HEK293 (cell line): ENCODE measurements at regions of chr5 and their contacts with region 1.

Region 1: GRCh38 chr5:160071516-160071915 is 47.7 kb downstream of the PWWP2A start:
- H3K4me3 ChIP-seq: no peak overlapping the region
- H3K27ac ChIP-seq: no peak overlapping the region
- H3K4me1 ChIP-seq: peaks cover 6% of the 10 kb centered on the region
- CTCF ChIP-seq: no peak

Region 2: DNA sequence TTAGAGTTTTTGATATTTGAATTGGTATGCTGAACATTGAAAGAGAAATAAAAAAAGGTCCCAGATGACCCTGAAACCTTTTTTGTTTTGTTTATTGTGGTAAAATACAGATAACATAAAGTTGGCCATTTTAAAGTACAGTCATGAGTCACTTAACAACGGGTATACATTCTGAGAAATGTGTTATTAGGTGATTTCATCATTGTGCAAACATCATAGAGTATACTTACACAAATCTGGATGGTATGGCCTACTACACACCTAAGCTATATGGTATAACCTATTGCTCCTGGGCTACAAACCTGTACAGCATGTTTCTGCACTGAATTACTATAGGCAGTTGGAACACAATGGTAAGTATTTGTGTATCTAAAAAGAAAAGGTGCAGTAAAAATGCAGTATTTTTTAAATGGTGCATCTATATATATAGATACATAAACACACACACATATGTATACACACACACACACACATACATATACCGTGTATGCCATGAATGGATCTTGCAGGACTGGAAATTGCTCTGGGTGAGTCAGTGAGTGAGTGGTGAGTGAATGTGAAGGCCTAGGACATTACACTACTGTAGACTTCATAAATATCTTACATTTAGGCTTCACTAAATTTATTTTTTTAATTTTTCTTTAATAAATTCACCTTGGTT is 31.6 kb before region 1 on chr5:
- CTCF ChIA-PET with region 1: no interaction called
- POLR2A ChIA-PET with region 1: no interaction called
- H3K4me3 ChIP-seq: no peak overlapping the region
- H3K27ac ChIP-seq: no peak overlapping the region
- H3K4me1 ChIP-seq: no peaks in the 10 kb centered on the region
- CTCF ChIP-seq: no peak

Region 3: DNA sequence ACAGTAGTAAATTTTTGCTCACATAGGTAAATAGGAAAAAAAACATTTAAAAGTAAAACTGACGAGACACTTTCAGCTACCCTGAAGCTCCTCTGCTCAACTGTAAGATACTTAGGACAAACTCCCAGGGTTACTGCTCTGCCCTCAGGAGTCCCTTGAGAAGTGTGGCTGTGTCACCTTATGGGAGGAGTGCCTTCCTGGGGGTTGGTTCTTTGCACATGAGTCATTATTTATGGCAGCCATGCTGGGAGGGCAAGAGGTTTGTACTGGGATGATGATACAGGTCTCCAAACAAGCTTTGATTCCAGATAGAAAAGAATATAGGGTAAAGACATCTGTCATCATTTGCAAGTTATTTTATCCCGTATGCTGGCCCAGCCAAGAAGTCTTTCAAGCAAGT is 16.7 kb before region 1 on chr5:
- CTCF ChIA-PET with region 1: no interaction called
- POLR2A ChIA-PET with region 1: no interaction called
- H3K4me3 ChIP-seq: no peak overlapping the region
- H3K27ac ChIP-seq: no peak overlapping the region
- H3K4me1 ChIP-seq: no peaks in the 10 kb centered on the region
- CTCF ChIP-seq: no peak

Region 4: DNA sequence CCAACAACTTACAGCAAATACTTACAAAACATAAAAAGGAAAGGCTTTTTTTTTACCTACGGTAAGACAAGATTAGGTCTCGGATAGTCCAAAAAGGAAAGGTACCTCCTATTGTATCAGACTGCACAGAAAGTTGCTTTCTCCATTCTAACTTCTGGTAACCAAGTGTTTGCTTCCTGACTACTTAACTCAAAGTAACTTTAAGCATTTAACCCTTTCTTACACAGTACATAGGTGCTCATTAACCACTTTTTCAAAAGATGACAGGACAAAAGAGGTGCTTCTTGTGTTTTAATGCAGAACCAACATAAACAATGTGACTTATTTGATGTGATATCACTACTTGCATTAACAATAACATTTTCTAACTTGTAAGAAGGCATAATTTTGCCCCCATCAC is 24.7 kb after region 1 on chr5:
- CTCF ChIA-PET with region 1: no interaction called
- POLR2A ChIA-PET with region 1: interaction called, 11 read pairs
- H3K4me3 ChIP-seq: no peak overlapping the region
- H3K27ac ChIP-seq: no peak overlapping the region
- H3K4me1 ChIP-seq: no peaks in the 10 kb centered on the region
- CTCF ChIP-seq: no peak